ENCODE measurements at regions of chr5 and their contacts with region 1.

Region 1: GRCh38 chr5:65243161-65243560 is 238.6 kb downstream of the ADAMTS6 start:
- DNase-seq: no peak
- ATAC-seq: no peak
- H3K4me3 ChIP-seq: no peak overlapping the region
- H3K27ac ChIP-seq: no peak overlapping the region
- H3K4me1 ChIP-seq: no peaks in the 10 kb centered on the region
- H3K27me3 ChIP-seq: peaks cover 2% of the 10 kb centered on the region; the same call in 1 of the 2 replicates
- CTCF ChIP-seq: no peak

Region 2: GRCh38 chr5:65364907-65365306 is 121.7 kb after region 1 on chr5:
- CTCF ChIA-PET with region 1: interaction called, 10 read pairs
- POLR2A ChIA-PET with region 1: no interaction called
- in situ Hi-C with region 1: no loop called
- intact Hi-C with region 1: no loop called
- DNase-seq: peak; percentile 2
- ATAC-seq: no peak
- H3K4me3 ChIP-seq: no peak overlapping the region
- H3K27ac ChIP-seq: no peak overlapping the region
- H3K4me1 ChIP-seq: no peaks in the 10 kb centered on the region
- H3K27me3 ChIP-seq: no peaks in the 10 kb centered on the region
- CTCF ChIP-seq: no peak

Measured in Panc1 (cell line).